ENCODE measurements at regions of chr17 and their contacts with region 1.

Region 1: DNA sequence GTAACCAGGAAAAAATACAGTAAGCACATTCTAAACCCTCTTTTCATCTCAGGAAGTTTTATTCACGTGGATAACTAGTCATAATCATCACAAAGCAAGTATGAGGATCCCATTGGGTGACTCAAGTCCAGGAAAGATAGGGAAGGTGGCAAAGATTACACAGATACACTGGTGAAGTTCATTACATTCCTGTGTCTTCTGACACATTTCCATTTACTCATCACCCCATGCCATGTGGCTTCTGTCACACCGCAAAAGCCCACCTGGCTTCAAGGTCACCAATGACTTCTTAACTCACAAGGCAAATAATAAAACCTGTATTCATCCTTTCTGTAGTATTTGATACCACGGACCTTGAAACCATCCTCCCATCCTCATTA is 17.0 kb downstream of the HS3ST3A1 start:
- DNase-seq: no peak
- H3K4me3 ChIP-seq: no peak overlapping the region
- H3K27ac ChIP-seq: no peak overlapping the region
- H3K4me1 ChIP-seq: peaks cover 5% of the 10 kb centered on the region
- H3K27me3 ChIP-seq: no peaks in the 10 kb centered on the region
- CTCF ChIP-seq: no peak
- POLR2A ChIP-seq: no peak

Region 2: GRCh38 chr17:13541032-13541480 is 43.6 kb before region 1 on chr17:
- intact Hi-C with region 1: no loop called
- DNase-seq: no peak
- H3K4me3 ChIP-seq: no peak overlapping the region
- H3K27ac ChIP-seq: peak overlapping the region; percentile 58
- H3K4me1 ChIP-seq: peaks cover 14% of the 10 kb centered on the region
- H3K27me3 ChIP-seq: no peaks in the 10 kb centered on the region
- CTCF ChIP-seq: no peak
- POLR2A ChIP-seq: no peak

Region 3: GRCh38 chr17:13647543-13648021 is 62.9 kb after region 1 on chr17:
- intact Hi-C with region 1: no loop called
- DNase-seq: no peak
- H3K4me3 ChIP-seq: no peak overlapping the region
- H3K27ac ChIP-seq: no peak overlapping the region
- H3K4me1 ChIP-seq: no peaks in the 10 kb centered on the region
- H3K27me3 ChIP-seq: no peaks in the 10 kb centered on the region
- CTCF ChIP-seq: no peak
- POLR2A ChIP-seq: no peak

Region 4: GRCh38 chr17:15086789-15087295 is 1502.2 kb after region 1 on chr17:
- intact Hi-C with region 1: loop called (anchors 5 kb)
- DNase-seq: no peak
- H3K4me3 ChIP-seq: no peak overlapping the region
- H3K27ac ChIP-seq: no peak overlapping the region
- H3K4me1 ChIP-seq: no peaks in the 10 kb centered on the region
- H3K27me3 ChIP-seq: no peaks in the 10 kb centered on the region
- CTCF ChIP-seq: no peak
- POLR2A ChIP-seq: no peak